Transverse colon (tissue), 4 donors: ENCODE measurements at regions of chr10 and their contacts with region 1.

Region 1: GRCh38 chr10:102835007-102835482 is 2.2 kb downstream of the CYP17A1 start:
- DNase-seq: peak; percentile 78
- H3K4me3 ChIP-seq: no peak overlapping the region
- H3K27ac ChIP-seq: no peak overlapping the region
- H3K4me1 ChIP-seq: peaks cover 0 to 10% (median 9%) of the 10 kb centered on the region in 4 donors
- H3K27me3 ChIP-seq: peaks cover 5% of the 10 kb centered on the region
- CTCF ChIP-seq: peak; percentile 80 to 88 (median 83)
- EP300 ChIP-seq: no peak
- POLR2A ChIP-seq: no peak

Region 2: GRCh38 chr10:102729029-102730026 is 105.7 kb before region 1 on chr10:
- in situ Hi-C with region 1: no loop called
- intact Hi-C with region 1: loop called (anchors 10 kb)
- DNase-seq: peak; percentile 88
- H3K4me3 ChIP-seq: no peak overlapping the region
- H3K27ac ChIP-seq: no peak overlapping the region
- H3K4me1 ChIP-seq: peaks cover 0 to 3% (median 0%) of the 10 kb centered on the region in 4 donors
- H3K27me3 ChIP-seq: no peaks in the 10 kb centered on the region
- CTCF ChIP-seq: peak; percentile 84 to 91 (median 90)
- EP300 ChIP-seq: no peak
- POLR2A ChIP-seq: no peak

Region 3: DNA sequence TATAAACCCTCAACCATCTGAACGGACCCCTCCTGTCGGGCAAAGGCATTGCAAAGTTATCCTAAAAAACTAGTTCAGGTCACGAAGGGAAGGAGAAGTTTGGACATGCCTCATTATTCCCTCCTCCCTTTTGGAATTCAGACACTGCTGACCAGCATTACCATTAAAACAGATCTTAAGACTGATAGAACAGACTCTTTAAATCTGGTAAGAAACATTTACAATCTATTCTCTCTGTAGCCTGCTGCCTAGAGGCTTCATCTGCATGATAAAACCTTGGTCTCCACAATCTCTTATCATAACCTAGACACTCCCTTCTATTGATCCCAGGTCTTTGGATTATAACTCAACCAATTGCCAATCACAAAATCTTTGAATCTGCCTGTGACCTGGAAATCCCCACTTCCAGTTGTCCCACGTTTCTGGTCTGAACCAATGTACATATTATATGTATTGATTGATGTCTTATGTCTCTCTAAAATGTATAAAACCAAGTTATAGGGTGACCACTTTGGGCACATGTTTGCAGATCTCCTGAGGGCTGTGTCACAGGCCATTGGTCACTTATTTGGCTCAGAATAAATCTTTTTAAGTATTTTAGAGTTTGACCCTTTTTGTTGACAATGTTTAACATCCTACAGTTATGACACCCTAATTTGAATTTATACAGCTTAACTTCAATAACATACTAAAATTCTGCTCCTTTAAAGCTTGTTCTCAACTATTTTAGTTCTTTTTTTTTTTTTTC is 59.6 kb after region 1 on chr10:
- in situ Hi-C with region 1: no loop called
- intact Hi-C with region 1: loop called (anchors 5 kb)
- DNase-seq: no peak
- H3K4me3 ChIP-seq: no peak overlapping the region
- H3K27ac ChIP-seq: no peak overlapping the region
- H3K4me1 ChIP-seq: no peaks in the 10 kb centered on the region
- H3K27me3 ChIP-seq: no peaks in the 10 kb centered on the region
- CTCF ChIP-seq: no peak
- EP300 ChIP-seq: no peak
- POLR2A ChIP-seq: no peak

Region 4: DNA sequence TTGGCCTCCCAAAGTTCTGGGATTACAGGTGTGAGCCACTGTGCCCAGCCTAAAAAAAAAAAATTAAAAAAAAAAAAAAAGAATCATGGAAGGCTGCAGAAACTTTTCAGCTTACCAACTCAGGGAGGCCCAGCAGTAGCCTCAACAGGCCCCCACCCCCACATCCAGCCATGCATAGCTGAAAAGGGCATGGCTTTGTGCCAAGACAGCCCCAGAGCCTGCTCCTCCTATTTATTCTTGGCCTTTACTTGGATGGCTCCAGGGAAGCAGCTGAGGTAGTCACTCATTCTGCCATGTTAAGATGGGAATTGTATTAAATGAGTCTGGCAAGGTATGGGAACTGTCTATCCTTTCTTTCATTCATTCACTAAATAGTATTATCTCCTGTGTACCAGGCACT is 69.3 kb after region 1 on chr10:
- in situ Hi-C with region 1: loop called in 3 of 4 experiments (anchors 5 to 10 kb)
- intact Hi-C with region 1: loop called (anchors 5 kb)
- DNase-seq: no peak
- H3K4me3 ChIP-seq: no peak overlapping the region
- H3K27ac ChIP-seq: no peak overlapping the region
- H3K4me1 ChIP-seq: no peaks in the 10 kb centered on the region
- H3K27me3 ChIP-seq: no peaks in the 10 kb centered on the region
- CTCF ChIP-seq: no peak
- EP300 ChIP-seq: no peak
- POLR2A ChIP-seq: no peak

Region 5: DNA sequence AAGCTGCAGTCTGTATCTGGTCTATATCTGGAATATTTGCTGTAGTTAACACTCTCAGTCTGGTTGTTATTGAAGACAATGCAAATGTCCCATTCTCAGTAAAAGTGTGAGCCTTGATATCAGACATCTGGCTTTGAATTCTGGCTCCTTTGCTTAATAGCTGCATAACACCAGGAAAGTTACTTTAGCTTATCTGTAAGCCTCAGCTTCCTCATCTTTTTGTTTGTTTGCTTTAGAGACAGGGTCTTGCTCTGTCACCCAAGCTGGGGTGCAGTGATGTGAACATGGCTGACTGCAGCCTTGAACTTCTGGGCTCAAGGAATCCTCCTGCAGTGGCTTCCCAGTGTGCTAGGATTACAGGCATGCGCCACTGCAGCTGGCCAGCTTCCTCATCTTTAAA is 124.3 kb after region 1 on chr10:
- in situ Hi-C with region 1: no loop called
- intact Hi-C with region 1: no loop called
- DNase-seq: no peak
- H3K4me3 ChIP-seq: no peak overlapping the region
- H3K27ac ChIP-seq: no peak overlapping the region
- H3K4me1 ChIP-seq: peaks cover 0 to 9% (median 2%) of the 10 kb centered on the region in 4 donors
- H3K27me3 ChIP-seq: no peaks in the 10 kb centered on the region
- CTCF ChIP-seq: no peak
- EP300 ChIP-seq: no peak
- POLR2A ChIP-seq: no peak

Region 6: GRCh38 chr10:103013416-103013815 is 178.4 kb after region 1 on chr10:
- in situ Hi-C with region 1: no loop called
- intact Hi-C with region 1: no loop called
- DNase-seq: no peak
- H3K4me3 ChIP-seq: no peak overlapping the region
- H3K27ac ChIP-seq: no peak overlapping the region
- H3K4me1 ChIP-seq: no peaks in the 10 kb centered on the region
- H3K27me3 ChIP-seq: no peaks in the 10 kb centered on the region
- CTCF ChIP-seq: no peak
- EP300 ChIP-seq: no peak
- POLR2A ChIP-seq: no peak